HepG2 (cell line): ENCODE measurements at regions of chr5 and their contacts with region 1.

Region 1: GRCh38 chr5:43484106-43484849 is 613 bp upstream of the TMEM267 start:
- DNase-seq: peak; percentile 69
- ATAC-seq: peak; percentile 80
- H3K4me3 ChIP-seq: peak overlapping the region; percentile 76 to 81 (median 81)
- H3K27ac ChIP-seq: peak overlapping the region; percentile 91
- H3K4me1 ChIP-seq: peaks cover 42% of the 10 kb centered on the region
- H3K27me3 ChIP-seq: no peaks in the 10 kb centered on the region; a peak in 1 of 5 replicates
- CTCF ChIP-seq: peak; percentile 83
- EP300 ChIP-seq: no peak
- POLR2A ChIP-seq: no peak
- RAD21 ChIP-seq: peak; percentile 69

Region 2: DNA sequence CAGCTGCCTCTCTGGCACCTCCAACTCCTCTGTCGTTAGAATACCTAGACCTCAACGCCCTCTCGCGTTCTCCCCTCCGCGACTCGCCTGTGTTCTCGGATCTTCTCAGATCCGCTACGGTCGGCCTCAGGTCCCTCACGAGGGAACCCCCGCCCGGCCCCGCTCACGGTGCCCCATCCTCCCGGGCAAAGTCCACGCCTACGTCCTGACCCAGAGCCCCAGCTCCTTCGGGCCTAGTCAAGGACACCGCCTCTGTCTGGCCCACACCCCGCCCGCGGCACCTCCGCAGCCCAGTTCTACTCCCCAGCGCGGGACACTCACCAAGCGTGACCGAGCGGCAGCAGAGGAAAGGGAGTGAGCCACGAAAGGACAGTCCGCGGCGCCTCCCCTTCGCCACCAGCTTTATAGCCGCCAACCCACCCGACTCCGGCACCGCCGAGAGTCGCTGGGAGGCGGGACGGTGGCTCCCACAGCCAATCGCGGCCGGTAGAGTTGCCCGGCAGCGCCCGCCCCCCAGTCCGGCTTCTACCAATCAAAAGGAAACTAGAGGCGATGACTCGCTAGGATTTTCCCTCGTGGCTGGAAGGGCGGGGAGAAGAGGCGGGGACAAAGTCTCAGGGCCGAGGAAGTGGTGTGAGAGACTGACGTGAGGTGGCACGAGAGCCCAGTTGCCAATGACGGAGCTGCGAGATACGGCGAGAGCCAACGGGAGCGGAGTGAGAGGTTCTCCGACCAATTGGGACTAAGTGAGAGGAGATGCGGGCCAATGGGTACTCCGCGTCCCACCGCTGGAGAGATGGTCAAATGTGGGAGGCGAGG is 171.0 kb before region 1 on chr5 and contains the start of gene HMGCS1:
- CTCF ChIA-PET with region 1: no interaction called
- POLR2A ChIA-PET with region 1: interaction called, 66 read pairs
- in situ Hi-C with region 1: no loop called
- intact Hi-C with region 1: loop called (anchors 5 kb)
- DNase-seq: peak; percentile 98
- ATAC-seq: peak; percentile 96
- H3K4me3 ChIP-seq: peak within 1 kb of the TSS; percentile 88 to 98 (median 88)
- H3K27ac ChIP-seq: peak within 1 kb of the TSS; percentile 94
- H3K4me1 ChIP-seq: peaks cover 48% of the 10 kb centered on the region
- H3K27me3 ChIP-seq: no peaks in the 10 kb centered on the region; a peak in 1 of 5 replicates
- CTCF ChIP-seq: peak; percentile 22; the same call in 1 of the 2 replicates
- EP300 ChIP-seq: peak in 1 of 2 experiments; percentile 78; a peak in 2 of 4 replicates
- POLR2A ChIP-seq: peak; percentile 98 to 99
- RAD21 ChIP-seq: 0 out of 2 replicates have a peak, but pooled peaks have one; percentile 25
- total RNA-seq, gene HMGCS1: 318 and 569 TPM in 2 replicates

Region 3: DNA sequence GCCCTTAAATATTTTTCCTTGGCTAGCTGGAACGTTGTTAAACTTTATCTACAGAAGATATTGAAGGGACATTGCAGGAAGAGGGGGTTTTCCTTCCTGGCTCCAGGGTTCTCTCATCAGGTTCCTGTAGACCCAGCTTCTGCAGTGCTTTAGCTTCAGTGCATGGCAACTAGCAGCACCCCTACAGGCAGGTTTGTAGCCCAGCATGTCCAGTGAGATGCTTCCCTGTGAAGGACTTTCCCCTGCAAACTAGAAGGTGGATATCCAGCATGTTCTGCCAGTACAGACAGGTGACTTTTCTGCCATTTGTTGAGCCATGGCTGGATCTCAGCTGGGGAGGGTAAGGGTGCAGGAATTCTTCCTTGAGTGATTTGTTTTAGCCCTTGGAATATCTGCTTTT is 82.5 kb before region 1 on chr5:
- CTCF ChIA-PET with region 1: no interaction called
- POLR2A ChIA-PET with region 1: interaction called, 84 read pairs
- in situ Hi-C with region 1: loop called (anchors 10 kb)
- intact Hi-C with region 1: loop called (anchors 1 kb)
- DNase-seq: peak; percentile 72
- ATAC-seq: peak; percentile 100
- H3K4me3 ChIP-seq: peak overlapping the region; percentile 53 to 78 (median 59)
- H3K27ac ChIP-seq: peak overlapping the region; percentile 71
- H3K4me1 ChIP-seq: peaks cover 10% of the 10 kb centered on the region
- H3K27me3 ChIP-seq: no peaks in the 10 kb centered on the region
- CTCF ChIP-seq: peak; percentile 63
- EP300 ChIP-seq: no peak
- POLR2A ChIP-seq: 0 out of 4 replicates have a peak, but pooled peaks of 1 of the 2 experiments have one; percentile 13
- RAD21 ChIP-seq: peak; percentile 52

Region 4: DNA sequence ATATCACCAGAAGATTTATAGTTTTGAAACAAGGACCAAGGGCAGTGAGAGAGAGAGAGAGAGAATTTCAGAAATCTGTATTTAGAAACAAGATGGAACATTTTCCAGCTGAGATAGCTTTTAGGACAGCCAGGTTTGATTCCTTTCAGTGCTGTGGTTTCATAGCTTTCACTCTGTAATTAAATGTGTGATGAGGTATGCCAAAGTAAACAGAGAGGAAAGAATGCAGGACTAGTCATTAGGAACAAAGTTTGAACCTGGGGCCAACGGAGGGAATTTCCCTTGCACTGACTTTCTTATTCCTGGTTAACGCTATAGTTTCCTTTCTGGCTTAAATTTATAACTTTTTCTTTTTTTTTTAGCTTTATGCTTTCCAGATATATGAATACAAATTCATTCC is 62.1 kb before region 1 on chr5:
- CTCF ChIA-PET with region 1: no interaction called
- POLR2A ChIA-PET with region 1: interaction called, 12 read pairs
- in situ Hi-C with region 1: no loop called
- intact Hi-C with region 1: no loop called
- DNase-seq: peak; percentile 62
- ATAC-seq: peak; percentile 86
- H3K4me3 ChIP-seq: peak overlapping the region in 1 of 3 experiments; percentile 7; a peak in 2 of 6 replicates
- H3K27ac ChIP-seq: peak overlapping the region; percentile 30
- H3K4me1 ChIP-seq: peaks cover 37% of the 10 kb centered on the region
- H3K27me3 ChIP-seq: no peaks in the 10 kb centered on the region
- CTCF ChIP-seq: no peak
- EP300 ChIP-seq: peak in 1 of 2 experiments; percentile 38; a peak in 2 of 4 replicates
- POLR2A ChIP-seq: no peak
- RAD21 ChIP-seq: no peak

Region 5: GRCh38 chr5:43453606-43454005 is 30.7 kb before region 1 on chr5:
- CTCF ChIA-PET with region 1: no interaction called
- POLR2A ChIA-PET with region 1: no interaction called
- in situ Hi-C with region 1: no loop called
- intact Hi-C with region 1: loop called (anchors 5 kb)
- DNase-seq: no peak
- ATAC-seq: no peak
- H3K4me3 ChIP-seq: no peak overlapping the region
- H3K27ac ChIP-seq: no peak overlapping the region
- H3K4me1 ChIP-seq: peaks cover 12% of the 10 kb centered on the region
- H3K27me3 ChIP-seq: no peaks in the 10 kb centered on the region
- CTCF ChIP-seq: no peak
- EP300 ChIP-seq: no peak
- POLR2A ChIP-seq: no peak
- RAD21 ChIP-seq: no peak

Region 6: DNA sequence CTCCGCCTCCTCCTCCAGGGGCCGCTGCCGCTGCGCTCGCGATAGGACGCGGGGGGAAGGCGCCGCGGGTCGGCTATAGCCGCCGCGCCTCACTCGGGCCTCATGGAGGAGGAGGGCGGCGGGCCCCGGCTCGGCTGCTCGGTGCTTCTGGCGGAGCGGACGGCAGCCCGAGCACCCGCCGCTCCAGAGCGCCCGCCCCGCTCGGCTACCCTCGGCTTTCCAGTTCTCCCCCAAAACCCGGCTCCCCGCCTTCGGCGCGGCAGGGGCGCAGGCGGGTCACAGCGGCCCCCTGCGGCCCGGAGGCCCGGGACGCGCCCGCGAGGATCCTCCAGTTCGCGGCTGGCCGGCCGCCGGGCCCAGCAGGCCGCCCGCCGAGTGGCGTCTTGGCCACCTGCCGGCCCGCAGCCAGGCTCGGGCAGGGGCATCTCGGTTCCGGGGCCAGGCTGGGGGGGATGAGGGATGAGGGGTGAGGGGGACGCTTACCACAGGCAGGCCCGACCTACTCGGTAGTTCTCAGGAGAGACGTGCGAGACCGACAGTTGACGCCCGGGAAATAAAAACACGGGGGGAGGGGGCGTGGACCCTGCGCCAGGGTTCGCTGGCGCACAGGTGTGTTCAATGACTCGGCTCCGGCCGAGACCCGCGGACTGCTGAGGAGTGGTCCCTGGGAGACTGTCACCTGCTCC is 72.7 kb after region 1 on chr5 and contains the start of gene PAIP1:
- CTCF ChIA-PET with region 1: interaction called, 3 read pairs
- POLR2A ChIA-PET with region 1: interaction called, 16 read pairs
- in situ Hi-C with region 1: no loop called
- intact Hi-C with region 1: loop called (anchors 2 kb)
- DNase-seq: peak; percentile 66
- ATAC-seq: peak; percentile 89
- H3K4me3 ChIP-seq: peak within 1 kb of the TSS; percentile 77 to 90 (median 84)
- H3K27ac ChIP-seq: peak within 1 kb of the TSS; percentile 95
- H3K4me1 ChIP-seq: peaks cover 48% of the 10 kb centered on the region
- H3K27me3 ChIP-seq: no peaks in the 10 kb centered on the region; a peak in 2 of 5 replicates
- CTCF ChIP-seq: peak; percentile 51; the same call in 1 of the 2 replicates
- EP300 ChIP-seq: no peak
- POLR2A ChIP-seq: peak; percentile 54 to 72
- RAD21 ChIP-seq: peak; percentile 48
- total RNA-seq, gene PAIP1: 116 and 141 TPM in 2 replicates